ENCODE measurements at regions of chr20 and their contacts with region 1.

Region 1: DNA sequence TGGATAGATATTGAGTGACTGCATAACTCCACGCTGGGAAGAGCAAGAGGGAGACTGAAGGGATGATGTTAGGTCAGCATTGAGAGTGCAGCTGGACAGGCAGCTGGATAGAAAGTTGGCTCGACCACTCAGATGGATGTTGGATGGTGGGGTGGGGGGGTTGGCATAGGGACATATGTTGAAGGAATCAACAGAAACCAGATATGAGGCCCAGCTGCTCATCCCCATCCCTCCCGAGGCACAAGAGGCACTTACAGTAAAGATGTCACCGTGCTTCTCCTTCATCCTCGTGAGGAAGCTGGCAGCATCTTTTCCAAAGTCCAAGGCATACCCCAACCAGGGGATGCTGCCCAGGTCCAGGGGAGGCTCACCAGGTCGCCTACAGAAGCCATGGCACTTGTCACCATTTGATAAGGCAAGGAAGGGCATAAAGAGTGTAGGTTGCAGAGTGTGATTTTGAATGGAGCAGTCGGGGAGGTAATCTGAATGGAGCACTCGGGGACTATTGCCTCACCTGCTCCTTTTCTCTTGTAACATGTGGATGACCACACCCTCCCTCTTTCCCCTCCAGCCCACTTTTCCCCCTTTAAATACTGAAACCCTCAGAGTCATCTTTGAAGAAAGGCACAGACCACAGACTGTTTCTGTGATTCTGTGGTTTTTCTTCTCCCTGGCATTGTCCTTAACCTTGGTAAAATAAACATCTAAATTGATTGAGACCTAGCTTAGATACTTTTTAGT is 18.0 kb downstream of the PTGIS start:
- DNase-seq: no peak
- ATAC-seq: no peak

Region 2: GRCh38 chr20:49601153-49601924 is 51.4 kb after region 1 on chr20:
- intact Hi-C with region 1: loop called (anchors 2 to 10 kb)
- DNase-seq: no peak
- ATAC-seq: no peak